K562 (cell line): ENCODE measurements at regions of chr4 and their contacts with region 1.

Region 1: DNA sequence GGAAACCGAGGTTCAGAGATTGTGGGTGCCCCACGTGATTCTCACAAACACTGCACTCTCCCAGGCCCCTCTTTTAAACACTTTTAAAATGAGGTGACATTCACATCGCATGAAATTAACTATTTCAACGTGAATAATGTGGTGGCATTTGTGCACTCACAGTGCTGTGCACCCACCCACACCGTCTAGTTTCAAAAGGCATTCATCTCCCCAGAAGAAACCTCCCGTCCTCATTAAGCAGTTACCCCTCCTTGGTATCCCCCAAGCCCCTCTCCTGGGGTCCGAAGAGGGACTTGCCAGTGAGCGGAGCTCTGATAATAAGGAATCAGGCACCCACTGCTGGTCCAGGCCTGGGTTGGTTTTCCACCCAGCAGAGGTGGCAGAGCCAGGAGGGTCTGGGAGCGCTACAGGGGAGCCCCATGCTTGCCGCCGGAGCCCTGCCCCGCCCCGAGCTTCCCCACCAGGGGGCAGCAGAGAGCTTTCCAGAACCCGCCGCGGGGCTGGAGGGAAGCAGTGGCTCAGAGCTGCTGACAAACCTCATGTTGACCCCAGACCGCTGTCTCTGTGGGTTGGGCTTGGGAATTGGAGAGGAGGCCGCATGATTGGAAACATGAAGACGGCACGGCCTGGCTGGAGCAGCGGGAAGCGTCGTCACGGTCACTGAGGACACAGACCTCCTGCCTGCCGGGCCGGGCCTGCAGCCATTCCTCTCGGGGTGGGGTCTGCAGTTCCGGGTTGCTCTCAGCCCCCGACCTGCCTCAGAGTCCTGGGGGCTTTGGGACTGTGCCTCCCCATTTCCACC is 27.5 kb upstream of the HTRA3 start:
- DNase-seq: peak; percentile 80 to 95 (median 93)
- ATAC-seq: peak; percentile 97
- H3K4me3 ChIP-seq: no peak overlapping the region
- H3K27ac ChIP-seq: no peak overlapping the region; the same call in 2 of the 3 replicates
- H3K4me1 ChIP-seq: peaks cover 6 to 23% of the 10 kb centered on the region in 2 experiments; a peak in 3 of 5 replicates
- H3K27me3 ChIP-seq: peaks cover 0 to 40% of the 10 kb centered on the region in 2 experiments; a peak in 2 of 5 replicates
- CTCF ChIP-seq: peak; percentile 87 to 92 (median 91)
- EP300 ChIP-seq: no peak
- POLR2A ChIP-seq: no peak
- RAD21 ChIP-seq: peak; percentile 94 to 95

Region 2: GRCh38 chr4:7910952-7911578 is 331.0 kb before region 1 on chr4:
- CTCF ChIA-PET with region 1: no interaction called
- POLR2A ChIA-PET with region 1: no interaction called
- in situ Hi-C with region 1: no loop called
- intact Hi-C with region 1: no loop called
- DNase-seq: no peak
- ATAC-seq: no peak
- H3K4me3 ChIP-seq: no peak overlapping the region
- H3K27ac ChIP-seq: no peak overlapping the region
- H3K4me1 ChIP-seq: no peaks in the 10 kb centered on the region
- H3K27me3 ChIP-seq: peaks cover 17 to 29% of the 10 kb centered on the region in 2 experiments; a peak in 4 of 5 replicates
- CTCF ChIP-seq: no peak
- EP300 ChIP-seq: no peak
- POLR2A ChIP-seq: no peak
- RAD21 ChIP-seq: no peak

Region 3: GRCh38 chr4:8267077-8267476 is 25.0 kb after region 1 on chr4:
- CTCF ChIA-PET with region 1: interaction called, 5 read pairs
- POLR2A ChIA-PET with region 1: interaction called, 4 read pairs
- in situ Hi-C with region 1: no loop called
- intact Hi-C with region 1: loop called (anchors 1 kb)
- DNase-seq: peak; percentile 71 to 83 (median 81)
- ATAC-seq: peak; percentile 96
- H3K4me3 ChIP-seq: no peak overlapping the region
- H3K27ac ChIP-seq: no peak overlapping the region
- H3K4me1 ChIP-seq: peaks cover 0 to 33% of the 10 kb centered on the region in 2 experiments; a peak in 4 of 5 replicates
- H3K27me3 ChIP-seq: peaks cover 0 to 20% of the 10 kb centered on the region in 2 experiments; a peak in 2 of 5 replicates
- CTCF ChIP-seq: peak; percentile 85 to 88 (median 86)
- EP300 ChIP-seq: no peak
- POLR2A ChIP-seq: no peak
- RAD21 ChIP-seq: peak; percentile 86 to 90

Region 4: GRCh38 chr4:8403173-8403753 is 161.2 kb after region 1 on chr4:
- CTCF ChIA-PET with region 1: interaction called, 69 read pairs
- POLR2A ChIA-PET with region 1: no interaction called
- in situ Hi-C with region 1: loop called (anchors 5 kb)
- intact Hi-C with region 1: loop called (anchors 1 kb)
- DNase-seq: peak; percentile 75 to 91 (median 87)
- ATAC-seq: peak; percentile 93
- H3K4me3 ChIP-seq: no peak overlapping the region
- H3K27ac ChIP-seq: no peak overlapping the region
- H3K4me1 ChIP-seq: peaks cover 0 to 13% of the 10 kb centered on the region in 2 experiments; a peak in 1 of 5 replicates
- H3K27me3 ChIP-seq: no peaks in the 10 kb centered on the region
- CTCF ChIP-seq: peak; percentile 86 to 97 (median 92)
- EP300 ChIP-seq: no peak
- POLR2A ChIP-seq: no peak
- RAD21 ChIP-seq: peak; percentile 96

Region 5: DNA sequence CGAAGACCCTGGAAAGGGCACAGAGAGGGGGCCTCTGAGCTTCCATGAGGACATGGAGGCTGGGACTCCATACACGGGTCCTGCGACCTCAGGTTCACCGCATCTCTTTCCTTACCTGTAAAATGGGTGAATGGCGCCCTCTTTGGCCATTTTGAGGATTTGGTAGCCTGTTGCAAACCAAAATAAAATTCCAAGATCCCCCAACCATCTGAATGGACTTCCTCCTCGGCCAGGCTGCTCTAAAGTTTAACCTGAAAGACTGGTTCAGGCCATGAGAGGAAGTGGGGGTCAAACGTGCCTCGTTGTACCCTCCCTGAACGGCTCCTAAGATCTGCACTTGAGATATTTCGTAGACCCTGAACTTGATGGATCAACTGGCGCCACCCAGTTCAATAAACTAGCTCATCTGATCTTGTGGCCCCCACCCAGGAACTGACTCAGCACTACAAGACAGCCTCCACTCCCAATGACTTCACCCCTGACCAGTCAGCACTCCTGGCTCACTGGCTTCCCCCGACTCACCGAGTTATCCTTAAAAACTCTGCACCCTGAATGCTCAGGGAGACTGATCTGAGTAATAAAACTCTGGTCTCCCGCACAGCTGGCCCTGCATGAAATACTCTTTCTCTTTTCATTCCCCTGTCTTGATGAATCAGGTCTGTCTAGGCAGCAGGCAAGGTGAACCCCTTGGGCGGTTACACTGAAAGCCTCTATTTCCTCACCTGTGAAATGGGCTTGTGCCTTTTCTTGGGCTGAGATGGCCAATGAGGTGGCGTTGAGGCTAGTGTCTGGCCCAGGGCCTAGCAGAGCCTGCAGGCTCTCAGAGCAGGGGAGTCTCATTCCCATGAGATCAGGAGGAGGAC is 305.2 kb after region 1 on chr4:
- CTCF ChIA-PET with region 1: no interaction called
- POLR2A ChIA-PET with region 1: no interaction called
- in situ Hi-C with region 1: no loop called
- intact Hi-C with region 1: loop called (anchors 2 kb)
- DNase-seq: peak; percentile 66 to 82 (median 71)
- ATAC-seq: peak; percentile 85
- H3K4me3 ChIP-seq: no peak overlapping the region
- H3K27ac ChIP-seq: peak overlapping the region; percentile 78
- H3K4me1 ChIP-seq: peaks cover 36 to 39% of the 10 kb centered on the region in 2 experiments
- H3K27me3 ChIP-seq: no peaks in the 10 kb centered on the region
- CTCF ChIP-seq: peak; percentile 60 to 77 (median 69)
- EP300 ChIP-seq: no peak; the same call in none of the 2 replicates
- POLR2A ChIP-seq: no peak
- RAD21 ChIP-seq: peak; percentile 53 to 85